Aorta (tissue), 5 donors: ENCODE measurements at regions of chr3 and their contacts with region 1.

Region 1: GRCh38 chr3:69084326-69085167 is at the start of gene ARL6IP5:
- DNase-seq: peak; percentile 97
- ATAC-seq: peak; percentile 86
- H3K4me3 ChIP-seq: peak within 1 kb of the TSS; percentile 86 to 99
- H3K27ac ChIP-seq: peak within 1 kb of the TSS; percentile 91 to 92
- H3K4me1 ChIP-seq: peaks cover 3 to 7% of the 10 kb centered on the region in 2 donors
- H3K27me3 ChIP-seq: no peaks in the 10 kb centered on the region
- total RNA-seq, gene ARL6IP5: 129 to 205 TPM

Region 2: GRCh38 chr3:68996356-68996995 is 88.1 kb before region 1 on chr3:
- intact Hi-C with region 1: no loop called
- DNase-seq: no peak
- ATAC-seq: no peak
- H3K4me3 ChIP-seq: no peak overlapping the region
- H3K27ac ChIP-seq: peak overlapping the region in 1 of 2 donors; percentile 41
- H3K4me1 ChIP-seq: peaks cover 4 to 5% of the 10 kb centered on the region in 2 donors
- H3K27me3 ChIP-seq: no peaks in the 10 kb centered on the region

Region 3: GRCh38 chr3:69013253-69014021 is 71.1 kb before region 1 on chr3 and contains the start of gene EOGT:
- intact Hi-C with region 1: loop called in 1 of 2 experiments (anchors 10 kb)
- DNase-seq: peak; percentile 92 to 97
- ATAC-seq: peak; percentile 91
- H3K4me3 ChIP-seq: peak within 1 kb of the TSS; percentile 81 to 86
- H3K27ac ChIP-seq: peak within 1 kb of the TSS; percentile 100
- H3K4me1 ChIP-seq: peaks cover 6 to 7% of the 10 kb centered on the region in 2 donors
- H3K27me3 ChIP-seq: no peaks in the 10 kb centered on the region
- total RNA-seq, gene EOGT: 104 to 134 TPM

Region 4: DNA sequence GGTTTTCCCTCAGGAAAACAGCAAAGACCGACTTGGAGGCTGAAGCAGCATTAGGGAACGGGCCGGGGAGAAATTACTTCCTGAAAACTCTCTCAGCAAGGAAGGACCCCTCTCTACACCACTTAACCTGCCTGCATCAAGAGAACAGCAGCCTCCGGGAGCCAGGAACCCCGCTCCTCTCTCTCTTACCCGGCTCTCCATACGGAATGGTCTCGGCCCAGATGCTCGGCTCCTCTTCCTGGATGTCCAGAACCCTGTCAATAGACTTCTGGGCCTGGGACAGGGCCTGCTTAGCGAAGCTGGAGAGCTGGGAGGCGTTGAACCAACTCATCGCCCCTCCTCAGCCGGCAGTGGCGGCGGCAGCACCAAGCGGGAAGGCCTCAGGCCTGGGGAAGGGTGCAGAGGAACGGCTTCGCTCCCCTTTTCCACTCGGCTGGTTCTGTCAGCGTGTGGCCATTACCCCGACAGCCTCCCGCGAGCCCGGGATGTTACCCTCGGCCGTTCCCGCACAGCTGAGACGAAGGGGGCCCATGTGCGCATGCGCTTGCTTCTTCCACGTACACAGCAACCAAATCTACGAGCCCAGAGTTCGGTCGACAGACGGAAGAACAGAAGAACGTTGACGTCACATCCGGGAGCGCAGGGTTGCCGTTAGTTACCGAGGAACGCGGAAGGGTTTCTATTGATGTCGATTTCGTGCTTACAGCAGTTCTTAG is 32.6 kb before region 1 on chr3 and contains the start of gene TMF1:
- intact Hi-C with region 1: loop called in 1 of 2 experiments (anchors 2 kb)
- DNase-seq: peak; percentile 99 to 100
- ATAC-seq: peak; percentile 99
- H3K4me3 ChIP-seq: peak within 1 kb of the TSS; percentile 69 to 76
- H3K27ac ChIP-seq: peak within 1 kb of the TSS; percentile 10 to 88
- H3K4me1 ChIP-seq: peaks cover 2 to 5% of the 10 kb centered on the region in 2 donors
- H3K27me3 ChIP-seq: no peaks in the 10 kb centered on the region
- total RNA-seq, gene TMF1: 45.6 to 52.8 TPM

Region 5: GRCh38 chr3:69204315-69204957 is 119.9 kb after region 1 on chr3:
- intact Hi-C with region 1: no loop called
- DNase-seq: no peak
- ATAC-seq: no peak
- H3K4me3 ChIP-seq: no peak overlapping the region
- H3K27ac ChIP-seq: no peak overlapping the region
- H3K4me1 ChIP-seq: no peaks in the 10 kb centered on the region
- H3K27me3 ChIP-seq: no peaks in the 10 kb centered on the region